Left ventricle myocardium inferior (tissue), 1 donor: ENCODE measurements at regions of chr16 and their contacts with region 1.

Region 1: GRCh38 chr16:65121870-65122723 is at the start of gene CDH11:
- DNase-seq: peak; percentile 60
- H3K4me3 ChIP-seq: peak within 1 kb of the TSS; percentile 77
- H3K27ac ChIP-seq: peak within 1 kb of the TSS; percentile 86
- H3K4me1 ChIP-seq: peaks cover 43% of the 10 kb centered on the region
- H3K27me3 ChIP-seq: peaks cover 62% of the 10 kb centered on the region
- CTCF ChIP-seq: peak; percentile 52
- total RNA-seq, gene CDH11: 20.9 TPM

Region 2: DNA sequence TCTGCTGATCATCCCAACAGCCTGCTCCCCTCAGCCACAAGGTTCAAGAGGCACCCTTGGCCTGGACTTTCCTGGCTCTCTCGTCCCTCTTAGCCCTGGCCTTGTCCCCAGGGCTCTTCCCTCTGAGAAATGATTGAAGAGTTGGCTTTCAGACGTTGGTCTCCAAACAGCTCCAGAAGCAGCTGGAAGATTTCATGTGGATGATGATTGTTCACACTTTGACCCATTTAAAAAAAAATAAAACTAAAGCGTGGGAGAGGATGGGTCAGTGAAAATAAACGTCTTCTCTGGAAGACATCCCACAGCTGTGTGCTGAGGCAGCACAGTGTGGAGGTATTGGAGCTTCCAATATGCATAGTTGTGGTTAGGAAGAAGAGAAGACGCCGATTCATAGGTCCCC is 54.5 kb after region 1 on chr16:
- intact Hi-C with region 1: no loop called
- DNase-seq: peak; percentile 54
- H3K4me3 ChIP-seq: no peak overlapping the region
- H3K27ac ChIP-seq: peak overlapping the region; percentile 6
- H3K4me1 ChIP-seq: peaks cover 5% of the 10 kb centered on the region
- H3K27me3 ChIP-seq: no peaks in the 10 kb centered on the region
- CTCF ChIP-seq: no peak

Region 3: GRCh38 chr16:65315081-65315780 is 193.1 kb after region 1 on chr16:
- intact Hi-C with region 1: loop called (anchors 10 kb)
- DNase-seq: peak; percentile 75
- H3K4me3 ChIP-seq: no peak overlapping the region
- H3K27ac ChIP-seq: peak overlapping the region; percentile 3
- H3K4me1 ChIP-seq: peaks cover 22% of the 10 kb centered on the region
- H3K27me3 ChIP-seq: no peaks in the 10 kb centered on the region
- CTCF ChIP-seq: no peak